ENCODE measurements at regions of chr18 and their contacts with region 1.

Region 1: GRCh38 chr18:44679056-44679905 is 1.4 kb upstream of the SETBP1 start:
- DNase-seq: peak; percentile 89 to 93 (median 89)
- ATAC-seq: peak; percentile 92 to 98 (median 97)
- H3K4me3 ChIP-seq: peak overlapping the region; percentile 47 to 96 (median 80)
- H3K27ac ChIP-seq: peak overlapping the region; percentile 95 to 100 (median 98)
- H3K4me1 ChIP-seq: peaks cover 0 to 32% (median 16%) of the 10 kb centered on the region in 12 donors
- H3K27me3 ChIP-seq: peaks cover 0 to 16% (median 0%) of the 10 kb centered on the region in 9 donors
- CTCF ChIP-seq: peak; percentile 47 to 85 (median 74)
- POLR2A ChIP-seq: peak in 1 of 2 donors; percentile 77

Region 2: GRCh38 chr18:43847164-43848091 is 831.9 kb before region 1 on chr18:
- intact Hi-C with region 1: no loop called
- DNase-seq: no peak
- ATAC-seq: peak in 1 of 4 donors; percentile 47
- H3K4me3 ChIP-seq: no peak overlapping the region
- H3K27ac ChIP-seq: peak overlapping the region in 9 of 12 donors; percentile 30 to 60 (median 38)
- H3K4me1 ChIP-seq: peaks cover 0 to 12% (median 0%) of the 10 kb centered on the region in 12 donors
- H3K27me3 ChIP-seq: no peaks in the 10 kb centered on the region
- CTCF ChIP-seq: no peak
- POLR2A ChIP-seq: no peak

Region 3: DNA sequence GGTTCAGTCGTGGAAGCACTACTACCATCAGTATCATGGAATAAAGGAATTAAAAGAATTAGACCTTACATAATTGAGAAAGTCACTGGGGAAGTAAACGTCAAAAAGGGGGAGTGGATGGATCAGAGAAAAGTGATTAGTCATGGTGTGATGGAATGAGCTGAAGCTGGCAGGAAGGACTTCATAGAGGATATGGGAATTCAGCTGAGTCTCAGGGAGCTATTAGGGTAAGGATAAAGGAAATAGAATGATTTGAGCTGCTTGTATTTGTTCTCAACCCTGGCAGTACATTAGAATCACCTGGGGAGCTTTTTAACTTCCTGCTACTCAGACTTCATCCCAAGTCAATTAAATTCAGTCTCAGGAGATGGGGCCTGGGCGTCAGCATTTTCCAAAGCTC is 52.0 kb before region 1 on chr18:
- intact Hi-C with region 1: no loop called
- DNase-seq: no peak
- ATAC-seq: peak in 2 of 4 donors; percentile 49 to 55
- H3K4me3 ChIP-seq: no peak overlapping the region
- H3K27ac ChIP-seq: no peak overlapping the region
- H3K4me1 ChIP-seq: peaks cover 0 to 20% (median 1%) of the 10 kb centered on the region in 12 donors
- H3K27me3 ChIP-seq: no peaks in the 10 kb centered on the region
- CTCF ChIP-seq: no peak
- POLR2A ChIP-seq: no peak

Region 4: DNA sequence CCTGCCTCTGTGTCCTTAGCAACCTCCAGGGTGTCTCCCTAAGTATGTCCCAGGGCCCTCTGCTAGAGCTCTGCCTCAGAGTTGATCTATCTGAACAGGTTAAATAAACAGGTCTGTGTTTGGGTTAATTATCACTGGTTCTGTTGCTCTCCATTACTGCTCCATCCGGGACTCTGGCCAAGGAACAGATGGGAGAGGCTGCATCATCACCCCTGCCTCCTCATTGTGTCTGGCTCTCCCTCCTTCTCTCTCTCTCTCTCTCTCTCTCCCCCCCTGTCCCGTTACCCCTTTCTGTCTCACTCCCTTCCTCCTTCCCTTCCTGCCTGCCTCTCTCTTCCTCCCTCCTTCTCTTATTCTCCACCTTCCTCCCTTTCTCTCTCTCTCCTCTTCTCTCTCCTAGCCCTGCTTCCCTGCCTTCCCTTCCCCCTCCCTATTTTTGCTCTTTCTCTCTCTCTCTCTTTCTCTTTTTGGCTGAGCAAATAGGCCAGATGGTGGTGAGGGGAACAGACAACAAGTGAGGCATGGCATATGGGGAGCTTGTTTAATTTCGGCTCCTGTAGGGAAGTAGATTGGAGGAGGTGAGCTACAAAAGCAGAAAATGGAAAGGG is 63.5 kb after region 1 on chr18:
- intact Hi-C with region 1: loop called in 1 of 10 experiments (anchors 10 kb)
- DNase-seq: peak in 4 of 5 donors; percentile 59 to 76 (median 72)
- ATAC-seq: peak; percentile 38 to 85 (median 70)
- H3K4me3 ChIP-seq: no peak overlapping the region
- H3K27ac ChIP-seq: peak overlapping the region in 10 of 12 donors; percentile 14 to 66 (median 52)
- H3K4me1 ChIP-seq: peaks cover 0 to 50% (median 27%) of the 10 kb centered on the region in 12 donors
- H3K27me3 ChIP-seq: peaks cover 0 to 56% (median 0%) of the 10 kb centered on the region in 9 donors
- CTCF ChIP-seq: no peak
- POLR2A ChIP-seq: no peak

Region 5: DNA sequence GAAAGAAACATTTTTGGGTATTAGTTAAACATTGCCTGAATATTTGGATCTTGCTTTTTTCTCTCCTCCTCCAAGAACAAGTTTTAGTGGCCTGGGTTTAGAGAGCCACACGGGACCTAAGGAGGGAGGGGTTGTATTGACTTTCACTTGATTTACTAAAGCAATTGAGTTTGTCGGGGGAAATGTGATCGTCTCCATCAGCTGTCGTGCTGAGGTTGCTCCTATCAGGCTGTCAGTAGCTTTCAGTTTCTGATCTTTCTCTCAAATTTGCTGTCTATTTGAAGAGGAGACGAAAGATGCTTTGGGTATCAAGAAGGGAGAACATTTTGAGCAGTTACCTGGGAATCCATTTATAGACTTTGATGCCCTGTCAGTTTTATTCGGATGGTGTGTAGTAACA is 107.4 kb after region 1 on chr18:
- intact Hi-C with region 1: loop called in 4 of 10 experiments (anchors 2 to 10 kb)
- DNase-seq: no peak
- ATAC-seq: no peak
- H3K4me3 ChIP-seq: peak overlapping the region in 1 of 12 donors; percentile 20
- H3K27ac ChIP-seq: peak overlapping the region in 1 of 12 donors; percentile 34
- H3K4me1 ChIP-seq: peaks cover 5 to 47% (median 33%) of the 10 kb centered on the region in 12 donors
- H3K27me3 ChIP-seq: peaks cover 0 to 4% (median 0%) of the 10 kb centered on the region in 9 donors
- CTCF ChIP-seq: no peak
- POLR2A ChIP-seq: no peak

Region 6: GRCh38 chr18:44826418-44827259 is 147.4 kb after region 1 on chr18:
- intact Hi-C with region 1: loop called in 2 of 10 experiments (anchors 5 to 10 kb)
- DNase-seq: peak in 4 of 5 donors; percentile 79 to 87 (median 82)
- ATAC-seq: peak; percentile 37 to 80 (median 66)
- H3K4me3 ChIP-seq: no peak overlapping the region
- H3K27ac ChIP-seq: peak overlapping the region; percentile 7 to 81 (median 64)
- H3K4me1 ChIP-seq: peaks cover 6 to 60% (median 33%) of the 10 kb centered on the region in 12 donors
- H3K27me3 ChIP-seq: no peaks in the 10 kb centered on the region
- CTCF ChIP-seq: no peak
- POLR2A ChIP-seq: no peak

Region 7: GRCh38 chr18:44895176-44895798 is 216.0 kb after region 1 on chr18:
- intact Hi-C with region 1: loop called (anchors 1 to 10 kb)
- DNase-seq: peak in 4 of 5 donors; percentile 40 to 57 (median 46)
- ATAC-seq: peak in 3 of 4 donors; percentile 68 to 82 (median 80)
- H3K4me3 ChIP-seq: no peak overlapping the region
- H3K27ac ChIP-seq: no peak overlapping the region
- H3K4me1 ChIP-seq: peaks cover 0 to 33% (median 7%) of the 10 kb centered on the region in 12 donors
- H3K27me3 ChIP-seq: no peaks in the 10 kb centered on the region
- CTCF ChIP-seq: peak in 11 of 12 donors; percentile 22 to 57 (median 48)
- POLR2A ChIP-seq: no peak

Region 8: DNA sequence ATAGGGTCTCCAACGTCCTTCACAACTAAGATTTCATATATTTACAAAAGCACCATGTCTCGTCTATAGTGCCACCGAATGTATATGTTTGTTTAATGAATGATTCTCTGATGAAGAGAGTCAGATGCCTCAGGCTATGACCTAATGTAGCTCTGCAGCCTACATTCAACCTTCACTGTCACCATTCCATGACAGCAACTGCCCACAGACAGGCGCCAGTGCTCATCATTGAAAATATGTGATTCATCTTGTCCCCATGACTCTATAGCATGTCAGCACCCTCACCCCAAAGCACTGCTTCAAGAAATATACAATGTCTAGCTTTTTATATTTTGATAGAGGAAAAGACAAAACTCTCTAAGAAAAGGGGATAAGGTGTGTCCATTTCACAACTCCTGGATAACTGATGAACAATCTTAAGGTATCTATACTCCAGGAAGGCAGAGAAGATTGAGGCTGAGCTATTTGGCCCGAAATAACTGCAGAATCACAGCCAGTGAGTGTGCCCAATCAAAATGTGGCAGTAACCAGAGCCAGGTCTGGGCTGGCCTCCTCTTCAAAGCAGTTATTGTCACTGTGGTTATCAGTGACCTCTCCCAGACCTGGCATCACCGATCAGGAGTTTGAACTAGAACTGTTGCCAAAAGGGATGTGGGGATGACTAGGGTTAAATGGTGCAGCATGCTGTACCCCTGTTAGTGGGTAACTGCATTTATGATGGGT is 248.0 kb after region 1 on chr18:
- intact Hi-C with region 1: no loop called
- DNase-seq: no peak
- ATAC-seq: no peak
- H3K4me3 ChIP-seq: no peak overlapping the region
- H3K27ac ChIP-seq: no peak overlapping the region
- H3K4me1 ChIP-seq: peaks cover 0 to 16% (median 0%) of the 10 kb centered on the region in 12 donors
- H3K27me3 ChIP-seq: no peaks in the 10 kb centered on the region
- CTCF ChIP-seq: no peak
- POLR2A ChIP-seq: no peak

Region 9: DNA sequence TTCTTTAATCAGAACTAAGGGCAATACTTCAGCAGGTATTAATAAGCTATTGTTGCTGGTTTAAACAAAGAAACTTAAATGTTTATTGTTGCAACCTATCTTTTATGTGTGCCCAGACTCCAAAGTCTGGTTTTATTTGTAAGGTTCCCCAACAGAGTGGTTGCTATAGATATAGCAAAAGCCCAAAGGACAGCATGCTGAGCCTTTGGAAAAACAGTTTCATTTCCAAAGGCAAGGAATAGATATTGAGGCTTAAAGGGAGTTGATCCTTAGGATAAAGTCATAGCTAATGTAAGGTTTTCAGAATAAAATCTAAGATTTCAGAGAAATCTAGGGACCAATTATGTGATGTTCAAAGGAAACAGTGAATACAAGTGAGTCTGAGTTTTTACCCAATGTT is 522.8 kb after region 1 on chr18:
- intact Hi-C with region 1: loop called in 1 of 10 experiments (anchors 10 kb)
- DNase-seq: no peak
- ATAC-seq: no peak
- H3K4me3 ChIP-seq: no peak overlapping the region
- H3K27ac ChIP-seq: no peak overlapping the region
- H3K4me1 ChIP-seq: no peaks in the 10 kb centered on the region
- H3K27me3 ChIP-seq: peaks cover 0 to 2% (median 0%) of the 10 kb centered on the region in 9 donors
- CTCF ChIP-seq: no peak
- POLR2A ChIP-seq: no peak

Region 10: DNA sequence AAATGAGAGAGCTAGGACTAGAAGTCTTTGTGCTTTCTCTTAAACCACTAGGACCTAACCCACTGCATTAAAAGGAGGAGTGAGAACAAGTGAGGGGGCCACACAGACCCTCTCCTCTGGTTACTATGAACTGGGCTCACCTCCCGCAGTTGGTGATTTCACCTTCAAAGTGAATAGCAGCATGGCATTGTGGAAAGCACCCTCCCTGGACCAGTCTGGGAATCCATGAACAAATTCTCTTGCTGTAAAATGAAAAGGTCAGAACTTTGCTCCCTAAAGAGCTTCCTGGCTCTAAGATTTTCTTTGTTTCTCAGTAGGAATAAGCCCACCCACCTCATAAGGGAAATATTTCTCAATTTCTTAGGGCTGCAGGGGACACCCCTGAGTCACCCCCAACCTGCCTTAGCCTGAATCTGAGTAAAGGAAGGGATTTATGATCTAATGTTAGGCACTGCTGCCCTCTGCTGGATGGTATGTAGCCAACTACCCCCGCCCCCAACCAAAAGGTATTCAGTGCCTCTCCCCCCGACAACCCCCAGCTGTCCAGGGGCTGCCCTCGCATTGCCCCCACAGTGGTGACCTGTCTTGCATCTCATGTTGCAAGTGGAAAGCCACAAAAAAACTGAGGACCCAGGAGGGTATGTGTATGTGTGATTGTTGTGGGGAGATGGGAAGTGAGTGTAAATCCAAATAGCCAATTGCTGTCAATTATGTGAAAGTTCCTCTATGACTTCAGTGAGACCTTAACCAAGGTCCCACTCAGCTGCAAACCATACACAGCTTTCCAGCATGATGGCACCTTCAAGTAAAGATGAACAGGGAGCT is 705.1 kb after region 1 on chr18:
- intact Hi-C with region 1: loop called in 2 of 10 experiments (anchors 10 kb)
- DNase-seq: peak in 4 of 5 donors; percentile 30 to 41 (median 39)
- ATAC-seq: peak; percentile 56 to 77 (median 72)
- H3K4me3 ChIP-seq: no peak overlapping the region
- H3K27ac ChIP-seq: no peak overlapping the region
- H3K4me1 ChIP-seq: peaks cover 0 to 9% (median 0%) of the 10 kb centered on the region in 12 donors
- H3K27me3 ChIP-seq: peaks cover 0 to 6% (median 0%) of the 10 kb centered on the region in 9 donors
- CTCF ChIP-seq: peak; percentile 43 to 79 (median 64)
- POLR2A ChIP-seq: no peak

Measured in heart left ventricle (tissue), 16 donors.